Heart left ventricle (tissue), 16 donors: ENCODE measurements at regions of chr9 and their contacts with region 1.

Region 1: DNA sequence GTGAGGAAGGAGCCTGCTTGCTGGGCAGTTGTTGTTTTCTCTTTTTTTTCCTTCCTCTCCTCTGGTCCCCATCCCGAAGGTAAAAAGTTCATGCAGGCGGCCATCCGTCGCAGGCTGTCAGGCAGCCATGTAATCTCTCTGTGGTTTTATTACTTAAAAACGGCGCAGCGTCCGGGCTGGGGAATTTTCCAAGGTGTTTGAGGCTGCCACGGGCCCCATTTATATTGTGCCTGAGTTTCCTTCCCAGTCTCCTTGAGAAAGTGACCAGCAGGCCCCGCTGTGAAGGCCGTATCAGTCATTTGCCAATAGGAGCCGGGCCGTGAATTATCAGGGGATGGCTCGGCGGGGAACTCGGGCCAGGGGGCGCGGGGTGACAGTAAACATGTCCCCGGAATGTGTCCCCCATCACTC is 289.7 kb downstream of the PBX3 start:
- DNase-seq: no peak
- ATAC-seq: no peak
- H3K4me3 ChIP-seq: peak overlapping the region in 2 of 12 donors; percentile 4 to 5
- H3K27ac ChIP-seq: no peak overlapping the region
- H3K4me1 ChIP-seq: no peaks in the 10 kb centered on the region
- H3K27me3 ChIP-seq: peaks cover 0 to 15% (median 0%) of the 10 kb centered on the region in 9 donors
- CTCF ChIP-seq: no peak
- POLR2A ChIP-seq: no peak

Region 2: DNA sequence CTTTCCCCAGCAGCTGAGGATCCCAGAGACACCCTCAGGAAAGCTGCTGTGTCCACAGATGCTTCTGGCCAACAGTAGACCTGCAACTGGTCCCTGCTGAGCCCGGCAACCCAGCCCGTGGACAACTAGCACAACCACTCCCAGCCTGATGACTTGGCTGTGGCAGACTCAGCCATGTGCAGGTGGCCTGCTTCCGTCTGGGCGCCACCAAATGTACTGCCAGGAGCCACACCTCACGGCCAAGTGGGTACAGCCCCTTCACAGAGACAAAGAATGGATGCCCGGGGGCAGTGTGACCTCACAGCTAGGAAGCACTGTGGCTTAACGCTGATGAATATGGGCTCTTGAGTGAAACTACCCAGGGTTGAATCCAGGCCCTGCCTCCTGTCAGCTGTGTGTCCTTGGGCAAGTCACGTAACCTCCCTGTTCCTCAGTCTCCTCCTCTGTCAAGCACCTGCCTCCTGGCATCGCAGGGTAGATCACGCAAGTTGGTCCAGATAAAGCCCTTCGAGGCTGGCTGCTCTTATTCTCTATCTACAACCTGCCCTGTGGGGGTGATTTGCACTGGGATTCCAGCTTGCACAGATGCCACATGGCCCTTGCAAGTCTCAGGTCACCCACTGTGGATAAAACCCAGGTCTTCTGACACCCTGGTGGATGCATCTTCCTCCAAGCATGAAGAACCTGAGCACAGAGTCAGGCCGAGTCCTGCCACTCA is 64.7 kb before region 1 on chr9:
- intact Hi-C with region 1: loop called in 1 of 10 experiments (anchors 10 kb)
- DNase-seq: no peak
- ATAC-seq: no peak
- H3K4me3 ChIP-seq: no peak overlapping the region
- H3K27ac ChIP-seq: no peak overlapping the region
- H3K4me1 ChIP-seq: no peaks in the 10 kb centered on the region
- H3K27me3 ChIP-seq: no peaks in the 10 kb centered on the region
- CTCF ChIP-seq: no peak
- POLR2A ChIP-seq: no peak